Heart right ventricle (tissue), 16 donors: ENCODE measurements at regions of chr18 and their contacts with region 1.

Region 1: GRCh38 chr18:31983020-31983419 is 35.6 kb upstream of the RNF125 start:
- DNase-seq: peak in 1 of 2 donors; percentile 11
- ATAC-seq: peak; percentile 67 to 95 (median 88)
- H3K4me3 ChIP-seq: no peak overlapping the region
- H3K27ac ChIP-seq: peak overlapping the region in 8 of 10 donors; percentile 12 to 73 (median 54)
- H3K4me1 ChIP-seq: peaks cover 0 to 30% (median 14%) of the 10 kb centered on the region in 9 donors
- H3K27me3 ChIP-seq: no peaks in the 10 kb centered on the region
- CTCF ChIP-seq: no peak

Region 2: DNA sequence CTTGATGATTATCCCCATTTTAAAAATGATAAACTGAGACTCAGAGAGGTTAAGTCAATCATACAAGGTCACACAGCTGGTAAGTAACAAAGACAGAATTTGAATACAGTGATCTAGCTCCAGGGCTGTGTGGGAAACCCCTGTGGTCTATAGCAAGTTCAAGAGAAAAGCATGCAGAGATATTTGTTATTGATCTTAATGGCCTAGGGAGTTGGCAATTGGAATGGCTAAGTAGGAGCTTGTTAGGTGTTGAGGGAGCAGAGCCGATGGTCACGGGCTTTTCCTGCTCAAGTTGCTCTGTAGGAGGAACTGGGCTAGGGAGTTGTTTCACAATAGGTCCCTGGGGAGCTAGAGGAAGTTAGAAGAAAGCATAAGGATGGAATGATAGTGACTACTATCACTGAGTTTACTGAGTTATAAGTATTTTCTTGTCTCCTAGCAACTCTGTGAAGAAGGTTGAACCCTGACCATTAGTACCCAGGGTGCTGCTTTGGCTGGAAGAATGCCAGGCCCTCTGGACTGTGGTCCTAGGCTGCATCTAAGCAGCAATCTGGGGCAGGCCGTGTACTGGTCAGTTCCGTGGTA is 65.6 kb after region 1 on chr18:
- intact Hi-C with region 1: loop called in 1 of 10 experiments (anchors 10 kb)
- DNase-seq: peak; percentile 35 to 36
- ATAC-seq: peak; percentile 70 to 93 (median 88)
- H3K4me3 ChIP-seq: no peak overlapping the region
- H3K27ac ChIP-seq: peak overlapping the region in 7 of 10 donors; percentile 27 to 82 (median 48)
- H3K4me1 ChIP-seq: peaks cover 0 to 41% (median 22%) of the 10 kb centered on the region in 9 donors
- H3K27me3 ChIP-seq: no peaks in the 10 kb centered on the region
- CTCF ChIP-seq: no peak